IMR-90 (cell line): ENCODE measurements at regions of chr16 and their contacts with region 1.

Region 1: DNA sequence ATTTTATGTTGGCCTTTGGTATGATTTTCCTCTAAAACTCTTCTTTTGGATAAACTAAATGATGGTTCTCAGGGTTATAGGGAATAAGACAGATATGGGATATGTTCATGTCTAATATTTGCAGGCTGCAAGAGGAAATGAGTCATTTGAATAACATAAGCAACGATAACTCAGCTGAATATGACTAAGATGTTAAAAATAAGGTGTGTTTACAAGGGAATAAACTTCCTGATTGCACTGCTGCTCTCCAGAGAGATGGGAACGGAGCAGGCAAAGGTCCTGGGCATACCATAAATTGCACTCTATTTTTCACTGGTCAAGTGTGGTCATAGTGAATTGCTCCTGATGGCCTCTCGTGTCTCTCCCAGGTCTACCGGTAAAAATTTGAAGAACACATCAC is 666.2 kb downstream of the TOX3 start:
- DNase-seq: peak; percentile 98
- ATAC-seq: peak; percentile 80
- H3K4me3 ChIP-seq: no peak overlapping the region
- H3K27ac ChIP-seq: peak overlapping the region; percentile 100
- H3K4me1 ChIP-seq: peaks cover 38% of the 10 kb centered on the region
- H3K27me3 ChIP-seq: no peaks in the 10 kb centered on the region
- CTCF ChIP-seq: no peak
- POLR2A ChIP-seq: peak; percentile 40; the same call in 1 of the 2 replicates
- RAD21 ChIP-seq: no peak

Region 2: GRCh38 chr16:51146256-51146924 is 734.4 kb before region 1 on chr16:
- CTCF ChIA-PET with region 1: interaction called, 4 read pairs
- POLR2A ChIA-PET with region 1: no interaction called
- dilution Hi-C with region 1: no loop called
- in situ Hi-C with region 1: no loop called
- intact Hi-C with region 1: loop called (anchors 5 kb)
- DNase-seq: peak; percentile 75
- ATAC-seq: 0 out of 2 replicates have a peak, but pooled peaks have one; percentile 16
- H3K4me3 ChIP-seq: peak overlapping the region; percentile 34; the same call in 1 of the 2 replicates
- H3K27ac ChIP-seq: no peak overlapping the region
- H3K4me1 ChIP-seq: no peaks in the 10 kb centered on the region
- H3K27me3 ChIP-seq: no peaks in the 10 kb centered on the region
- CTCF ChIP-seq: peak; percentile 73
- POLR2A ChIP-seq: no peak
- RAD21 ChIP-seq: peak; percentile 75

Region 3: GRCh38 chr16:51924744-51925143 is 44.0 kb after region 1 on chr16:
- CTCF ChIA-PET with region 1: no interaction called
- POLR2A ChIA-PET with region 1: no interaction called
- dilution Hi-C with region 1: no loop called
- in situ Hi-C with region 1: no loop called
- intact Hi-C with region 1: no loop called
- DNase-seq: no peak
- ATAC-seq: no peak
- H3K4me3 ChIP-seq: no peak overlapping the region
- H3K27ac ChIP-seq: no peak overlapping the region
- H3K4me1 ChIP-seq: no peaks in the 10 kb centered on the region
- H3K27me3 ChIP-seq: no peaks in the 10 kb centered on the region; the same call in 1 of the 2 replicates
- CTCF ChIP-seq: no peak
- POLR2A ChIP-seq: no peak
- RAD21 ChIP-seq: no peak

Region 4: DNA sequence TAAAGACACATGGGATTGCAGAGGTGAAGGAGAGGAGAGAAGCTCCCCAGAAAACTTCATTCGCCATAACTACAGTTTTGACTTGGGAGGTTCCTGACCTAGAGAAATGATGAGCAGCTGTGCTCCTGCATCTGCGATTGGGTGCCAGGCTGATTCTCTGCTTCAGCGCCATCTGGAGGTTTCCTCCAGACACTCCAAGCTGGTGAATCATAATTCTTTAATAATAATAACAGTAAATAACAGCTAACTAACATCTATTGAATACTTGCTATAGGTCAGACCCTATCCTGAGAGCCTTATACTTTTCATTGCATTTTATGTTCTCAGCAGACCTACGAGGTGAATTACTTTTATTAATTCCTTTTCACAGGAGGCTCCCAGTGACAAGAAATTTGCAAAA is 90.4 kb after region 1 on chr16:
- CTCF ChIA-PET with region 1: interaction called, 5 read pairs
- POLR2A ChIA-PET with region 1: no interaction called
- dilution Hi-C with region 1: no loop called
- in situ Hi-C with region 1: no loop called
- intact Hi-C with region 1: loop called (anchors 5 kb)
- DNase-seq: peak; percentile 52
- ATAC-seq: peak; percentile 31
- H3K4me3 ChIP-seq: no peak overlapping the region
- H3K27ac ChIP-seq: no peak overlapping the region
- H3K4me1 ChIP-seq: peaks cover 15% of the 10 kb centered on the region
- H3K27me3 ChIP-seq: no peaks in the 10 kb centered on the region
- CTCF ChIP-seq: peak; percentile 64
- POLR2A ChIP-seq: no peak
- RAD21 ChIP-seq: peak; percentile 69